Dendritic cell treated with granulocyte-macrophage colony-stimulating factor and Interleukin-4, amounts not matched to agents 40 ng/mL and 50 ng/mL, for 4 days (primary cell): ENCODE measurements at regions of chr12 and their contacts with region 1.

Region 1: GRCh38 chr12:71780237-71780822 is 25.7 kb downstream of the RAB21 start:
- H3K4me3 Mint-ChIP-seq: no peak overlapping the region
- H3K27ac Mint-ChIP-seq: no peak overlapping the region
- H3K4me1 Mint-ChIP-seq: peaks cover 9% of the 10 kb centered on the region
- H3K27me3 Mint-ChIP-seq: no peaks in the 10 kb centered on the region

Region 2: DNA sequence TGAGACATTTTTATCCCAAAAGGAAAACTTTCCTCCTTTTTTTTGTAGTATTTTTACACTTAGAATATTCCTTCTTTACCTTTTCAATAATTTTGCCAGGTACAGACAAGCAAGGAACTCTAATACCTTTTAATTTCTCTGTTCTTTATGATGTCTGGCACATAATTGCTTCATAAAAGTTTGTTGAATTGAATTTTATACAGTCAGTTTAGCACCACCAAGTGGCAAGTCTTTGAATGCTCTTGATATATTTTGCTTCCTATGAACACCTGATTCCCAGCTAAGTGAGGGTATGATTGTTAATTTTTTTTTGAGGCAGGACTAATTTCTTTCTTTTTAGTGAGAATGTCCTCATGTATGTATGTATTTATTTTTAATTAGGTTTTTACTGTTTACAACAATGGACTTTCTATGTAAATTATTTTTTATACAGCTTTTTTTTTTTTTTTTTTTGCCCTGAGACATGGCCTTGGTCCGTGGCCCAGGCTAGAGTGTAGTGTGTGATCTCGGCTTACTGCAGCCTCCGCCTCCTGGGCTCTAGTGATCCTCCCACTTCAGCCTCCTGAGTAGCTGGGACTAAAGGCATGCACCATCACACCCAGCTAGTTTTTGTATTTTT is 66.1 kb after region 1 on chr12:
- intact Hi-C with region 1: loop called (anchors 1 kb)
- H3K4me3 Mint-ChIP-seq: no peak overlapping the region
- H3K27ac Mint-ChIP-seq: no peak overlapping the region
- H3K4me1 Mint-ChIP-seq: peaks cover 16% of the 10 kb centered on the region
- H3K27me3 Mint-ChIP-seq: no peaks in the 10 kb centered on the region

Region 3: GRCh38 chr12:72207486-72208409 is 427.4 kb after region 1 on chr12:
- intact Hi-C with region 1: no loop called
- H3K4me3 Mint-ChIP-seq: no peak overlapping the region
- H3K27ac Mint-ChIP-seq: no peak overlapping the region
- H3K4me1 Mint-ChIP-seq: no peaks in the 10 kb centered on the region
- H3K27me3 Mint-ChIP-seq: no peaks in the 10 kb centered on the region